HCT116 (cell line): ENCODE measurements at regions of chrX and their contacts with region 1.

Region 1: GRCh38 chrX:130539721-130540321 is 138.0 kb downstream of the RBMX2 start:
- DNase-seq: peak; percentile 27
- ATAC-seq: peak; percentile 80
- H3K4me3 ChIP-seq: no peak overlapping the region
- H3K27ac ChIP-seq: no peak overlapping the region
- H3K4me1 ChIP-seq: no peaks in the 10 kb centered on the region
- H3K27me3 ChIP-seq: no peaks in the 10 kb centered on the region
- CTCF ChIP-seq: peak; percentile 32 to 63 (median 61); a peak in 5 of 6 replicates
- POLR2A ChIP-seq: no peak
- RAD21 ChIP-seq: peak; percentile 52

Region 2: GRCh38 chrX:130224518-130225209 is 315.2 kb before region 1 on chrX:
- CTCF ChIA-PET with region 1: no interaction called
- POLR2A ChIA-PET with region 1: no interaction called
- RAD21 ChIA-PET with region 1: no interaction called
- intact Hi-C with region 1: no loop called
- DNase-seq: no peak
- ATAC-seq: no peak
- H3K4me3 ChIP-seq: no peak overlapping the region
- H3K27ac ChIP-seq: no peak overlapping the region
- H3K4me1 ChIP-seq: no peaks in the 10 kb centered on the region
- H3K27me3 ChIP-seq: no peaks in the 10 kb centered on the region
- CTCF ChIP-seq: no peak
- POLR2A ChIP-seq: no peak
- RAD21 ChIP-seq: no peak

Region 3: GRCh38 chrX:130550351-130550750 is 10.5 kb after region 1 on chrX:
- CTCF ChIA-PET with region 1: interaction called, 10 read pairs
- POLR2A ChIA-PET with region 1: no interaction called
- RAD21 ChIA-PET with region 1: no interaction called
- intact Hi-C with region 1: no loop called
- DNase-seq: no peak
- ATAC-seq: no peak
- H3K4me3 ChIP-seq: no peak overlapping the region
- H3K27ac ChIP-seq: no peak overlapping the region
- H3K4me1 ChIP-seq: no peaks in the 10 kb centered on the region
- H3K27me3 ChIP-seq: no peaks in the 10 kb centered on the region
- CTCF ChIP-seq: no peak
- POLR2A ChIP-seq: no peak
- RAD21 ChIP-seq: no peak